Kidney (tissue), 22 donors: ENCODE measurements at regions of chr7 and their contacts with region 1.

Region 1: DNA sequence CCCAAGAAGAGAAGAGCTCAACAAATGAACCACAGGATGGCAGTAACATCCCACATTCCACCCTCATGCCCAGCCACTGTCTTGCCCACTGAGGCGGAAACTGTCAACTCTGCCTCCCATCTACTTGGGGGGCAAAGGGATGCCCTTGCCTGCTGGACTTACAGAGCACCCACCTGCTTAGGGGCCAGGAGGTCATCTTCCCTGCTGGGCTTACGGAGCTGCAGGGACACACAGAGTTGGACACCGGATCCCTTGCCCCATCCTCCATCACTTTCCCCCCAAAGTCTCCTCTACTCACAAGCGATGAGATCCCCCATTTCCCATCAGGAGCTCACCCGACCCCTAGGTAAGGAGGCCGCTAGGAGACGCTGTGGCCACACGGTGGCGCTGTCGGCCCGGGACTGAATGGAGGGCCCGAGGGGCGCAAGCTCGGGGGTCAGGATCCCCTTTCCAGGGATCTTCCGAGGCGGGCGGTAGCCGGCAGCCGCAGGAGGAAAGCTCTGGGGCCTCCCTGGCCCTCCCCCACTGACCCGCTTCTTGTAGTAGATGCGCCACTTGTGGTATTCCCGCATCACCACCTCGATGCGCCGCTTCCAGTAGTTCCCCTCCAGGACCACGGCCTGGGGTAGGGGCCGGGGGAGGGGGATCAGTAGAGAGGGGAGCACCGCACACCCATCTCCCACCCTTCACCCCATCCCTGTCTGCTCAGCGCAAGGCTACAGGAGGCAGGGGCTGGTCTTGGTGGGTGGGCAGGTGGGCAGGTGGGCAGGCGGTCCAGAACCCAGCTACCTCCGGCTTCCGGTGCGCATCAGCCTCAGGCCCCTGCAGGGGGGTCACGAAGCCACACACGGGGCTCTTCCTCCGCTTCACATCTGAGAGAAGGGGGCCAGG is 17.3 kb downstream of the MLXIPL start:
- DNase-seq: peak in 4 of 5 donors; percentile 78 to 88 (median 84)
- H3K4me3 ChIP-seq: no peak overlapping the region
- H3K27ac ChIP-seq: no peak overlapping the region
- H3K4me1 ChIP-seq: no peaks in the 10 kb centered on the region
- H3K27me3 ChIP-seq: no peaks in the 10 kb centered on the region
- CTCF ChIP-seq: peak; percentile 87

Region 2: DNA sequence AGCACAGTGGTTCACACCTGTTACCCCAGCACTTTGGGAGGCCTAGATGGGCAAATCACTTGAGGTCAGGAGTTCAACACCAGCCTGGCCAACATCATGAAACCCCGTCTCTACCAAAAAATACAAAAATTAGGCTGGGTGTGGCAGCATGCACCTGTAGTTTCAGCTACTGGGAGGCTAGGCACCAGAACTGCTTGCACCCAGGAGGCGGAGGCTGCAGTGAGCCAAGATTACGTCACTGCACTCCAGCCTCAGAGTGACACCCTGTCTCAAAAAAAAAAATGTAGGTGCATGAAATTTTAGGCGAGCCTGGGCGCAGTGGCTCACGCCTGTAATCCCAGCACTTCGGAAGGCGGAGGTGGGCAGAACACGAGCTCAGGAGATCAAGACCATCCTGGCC is 59.2 kb before region 1 on chr7:
- intact Hi-C with region 1: no loop called
- DNase-seq: no peak
- H3K4me3 ChIP-seq: no peak overlapping the region
- H3K27ac ChIP-seq: no peak overlapping the region
- H3K4me1 ChIP-seq: peaks cover 0 to 2% (median 0%) of the 10 kb centered on the region in 3 donors
- H3K27me3 ChIP-seq: no peaks in the 10 kb centered on the region
- CTCF ChIP-seq: no peak

Region 3: DNA sequence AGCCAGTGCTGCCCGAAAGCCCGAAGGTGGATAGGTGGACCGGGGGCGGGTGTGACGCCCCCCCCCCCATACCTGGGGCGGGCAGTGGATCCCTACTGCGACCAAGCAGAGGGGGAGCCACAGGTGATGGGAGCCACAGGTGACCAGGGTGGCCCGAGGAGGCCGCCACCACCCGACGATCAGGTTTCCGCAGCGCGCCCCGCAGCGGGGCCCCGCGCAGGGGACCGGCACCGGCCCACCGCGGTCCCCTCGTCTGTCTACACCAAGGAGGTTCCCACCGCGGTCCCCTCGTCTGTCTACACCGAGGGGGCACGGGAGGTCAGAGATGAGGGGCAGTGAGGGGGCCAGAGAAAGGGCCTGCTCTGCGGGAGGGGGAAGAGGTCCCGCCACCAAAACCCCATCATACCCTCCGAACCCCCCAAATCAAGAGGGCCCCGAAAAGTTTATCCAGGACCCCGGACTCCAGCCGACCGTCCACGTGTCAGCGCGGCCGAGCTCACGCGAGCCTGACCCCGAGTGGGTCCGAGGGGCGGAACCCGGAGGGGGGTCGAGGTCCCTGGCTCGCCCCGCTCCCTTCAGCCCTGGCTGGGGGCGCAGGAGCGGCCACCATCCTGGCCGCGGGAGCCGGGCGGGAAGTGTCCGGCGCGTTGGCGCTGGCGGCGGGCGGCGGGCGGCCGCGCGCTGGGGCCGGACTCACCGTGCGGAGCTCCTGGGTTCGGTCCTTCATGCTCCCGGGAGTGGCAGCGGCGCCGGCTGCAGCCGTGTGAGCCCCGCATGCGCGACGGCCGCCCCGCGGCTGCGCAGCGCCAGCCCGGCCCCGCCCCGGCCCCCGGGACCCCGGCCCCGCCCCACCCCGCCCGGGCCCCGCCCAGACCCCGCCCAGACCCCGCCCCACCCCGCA is 112.1 kb after region 1 on chr7 and contains the start of gene STX1A:
- intact Hi-C with region 1: loop called (anchors 5 kb)
- DNase-seq: peak; percentile 69 to 91 (median 80)
- H3K4me3 ChIP-seq: peak within 1 kb of the TSS; percentile 33 to 67 (median 60)
- H3K27ac ChIP-seq: no peak within 1 kb of the TSS
- H3K4me1 ChIP-seq: peaks cover 0 to 8% (median 0%) of the 10 kb centered on the region in 3 donors
- H3K27me3 ChIP-seq: no peaks in the 10 kb centered on the region
- CTCF ChIP-seq: no peak
- total RNA-seq, gene STX1A: 7.4 TPM